Aorta (tissue), 5 donors: ENCODE measurements at regions of chr7 and their contacts with region 1.

Region 1: GRCh38 chr7:37432281-37432920 is 16.3 kb downstream of the ELMO1 start:
- DNase-seq: no peak
- ATAC-seq: no peak
- H3K4me3 ChIP-seq: no peak overlapping the region
- H3K27ac ChIP-seq: no peak overlapping the region
- H3K4me1 ChIP-seq: no peaks in the 10 kb centered on the region
- H3K27me3 ChIP-seq: no peaks in the 10 kb centered on the region

Region 2: GRCh38 chr7:37376386-37376785 is 56.0 kb before region 1 on chr7:
- intact Hi-C with region 1: no loop called
- DNase-seq: no peak
- ATAC-seq: no peak
- H3K4me3 ChIP-seq: no peak overlapping the region
- H3K27ac ChIP-seq: no peak overlapping the region
- H3K4me1 ChIP-seq: no peaks in the 10 kb centered on the region
- H3K27me3 ChIP-seq: no peaks in the 10 kb centered on the region

Region 3: DNA sequence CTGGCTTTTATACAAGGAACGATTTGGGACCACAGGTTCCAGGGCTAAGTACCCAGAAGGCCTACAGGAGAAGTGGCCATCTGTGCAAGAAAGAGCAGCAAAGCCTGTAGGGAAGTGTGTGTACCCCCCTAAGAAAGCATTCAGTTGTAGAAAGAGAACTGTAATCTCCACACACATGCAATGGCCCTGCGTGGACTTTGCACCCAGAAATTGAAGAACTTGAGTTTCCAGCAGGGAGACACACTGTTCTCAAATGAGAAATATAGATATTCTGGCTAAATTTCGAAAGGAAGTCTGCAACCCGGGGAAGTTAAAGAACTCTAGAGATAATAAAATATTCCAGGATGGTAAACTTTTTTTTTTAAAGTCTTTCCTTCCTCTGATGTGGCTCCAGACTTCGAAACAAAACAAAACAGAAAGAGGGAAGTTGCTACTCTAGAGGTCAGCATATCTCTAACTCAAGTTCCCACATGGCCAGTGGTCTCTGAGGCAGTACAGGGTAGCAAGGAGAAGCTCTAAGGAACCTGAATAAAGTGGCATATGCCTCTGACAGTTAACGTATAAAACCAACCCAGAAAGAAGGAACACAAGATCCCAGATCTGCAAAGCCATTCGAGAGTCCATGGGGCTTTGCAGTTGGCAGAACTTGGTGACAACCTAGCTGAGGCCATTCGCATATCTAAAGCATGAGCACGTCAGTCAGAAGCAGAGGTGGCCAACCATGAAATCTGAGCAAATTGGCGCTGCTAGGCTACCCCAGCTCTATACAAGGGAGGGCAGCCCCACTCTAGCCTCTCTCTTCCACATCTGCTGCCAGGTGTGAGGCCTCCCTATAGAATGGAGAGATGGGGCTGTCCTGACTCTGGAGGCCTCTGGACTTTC is 40.4 kb before region 1 on chr7:
- intact Hi-C with region 1: loop called in 1 of 2 experiments (anchors 1 kb)
- DNase-seq: peak in 1 of 2 donors; percentile 56
- ATAC-seq: no peak
- H3K4me3 ChIP-seq: no peak overlapping the region
- H3K27ac ChIP-seq: no peak overlapping the region
- H3K4me1 ChIP-seq: no peaks in the 10 kb centered on the region
- H3K27me3 ChIP-seq: no peaks in the 10 kb centered on the region